MCF 10A (cell line): ENCODE measurements at regions of chr4 and their contacts with region 1.

Region 1: DNA sequence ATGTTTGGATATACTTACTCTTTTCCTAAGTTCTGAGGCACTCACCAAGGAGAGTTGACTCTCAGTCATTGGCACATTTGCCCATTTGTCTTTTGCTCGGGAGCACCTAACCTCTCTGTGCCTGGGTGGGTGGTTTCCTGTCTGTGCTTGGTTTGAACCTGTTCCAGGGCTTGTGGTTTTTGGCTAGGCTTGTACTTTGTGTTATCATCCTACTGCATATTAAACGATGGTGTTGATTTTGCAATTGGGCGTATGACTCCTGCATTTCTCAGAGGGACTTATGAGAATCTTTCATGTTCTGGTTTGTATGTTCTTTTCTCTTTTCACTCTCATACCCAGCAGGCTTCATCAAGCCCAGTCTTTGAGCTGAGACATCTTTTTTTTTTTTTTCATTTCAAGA is 161.7 kb downstream of the BTC start:
- DNase-seq: peak; percentile 100
- H3K4me3 Mint-ChIP-seq: peak overlapping the region; percentile 51
- H3K27ac Mint-ChIP-seq: peak overlapping the region; percentile 80
- H3K4me1 Mint-ChIP-seq: peaks cover 33% of the 10 kb centered on the region
- H3K27me3 Mint-ChIP-seq: no peaks in the 10 kb centered on the region
- CTCF ChIP-seq: no peak

Region 2: DNA sequence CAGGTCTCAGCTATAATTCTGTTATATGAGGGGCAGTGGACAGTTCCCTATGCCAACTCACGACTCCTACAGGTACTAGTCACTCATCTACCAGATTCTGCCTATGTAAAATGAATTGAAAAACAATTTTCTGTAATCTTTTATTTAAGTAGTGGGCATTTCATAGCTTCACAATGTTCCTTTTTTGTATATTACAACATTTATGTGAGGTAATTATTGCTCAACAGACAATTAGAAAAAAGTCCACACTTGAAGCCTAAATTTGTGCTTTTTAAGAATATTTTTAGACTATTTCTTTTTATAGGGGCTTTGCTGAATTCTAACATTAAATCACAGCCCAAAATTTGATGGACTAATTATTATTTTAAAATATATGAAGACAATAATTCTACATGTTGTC is 247.2 kb before region 1 on chr4:
- CTCF ChIA-PET with region 1: no interaction called
- POLR2A ChIA-PET with region 1: no interaction called
- intact Hi-C with region 1: no loop called
- DNase-seq: no peak
- H3K4me3 Mint-ChIP-seq: no peak overlapping the region
- H3K27ac Mint-ChIP-seq: no peak overlapping the region
- H3K4me1 Mint-ChIP-seq: no peaks in the 10 kb centered on the region
- H3K27me3 Mint-ChIP-seq: no peaks in the 10 kb centered on the region
- CTCF ChIP-seq: no peak

Region 3: GRCh38 chr4:74583077-74583693 is 49.4 kb before region 1 on chr4:
- CTCF ChIA-PET with region 1: interaction called, 3 read pairs
- POLR2A ChIA-PET with region 1: interaction called, 10 read pairs
- intact Hi-C with region 1: no loop called
- DNase-seq: peak; percentile 9
- H3K4me3 Mint-ChIP-seq: no peak overlapping the region
- H3K27ac Mint-ChIP-seq: peak overlapping the region; percentile 79
- H3K4me1 Mint-ChIP-seq: peaks cover 23% of the 10 kb centered on the region
- H3K27me3 Mint-ChIP-seq: no peaks in the 10 kb centered on the region
- CTCF ChIP-seq: no peak

Region 4: GRCh38 chr4:74659576-74660411 is 27.2 kb after region 1 on chr4:
- CTCF ChIA-PET with region 1: interaction called, 3 read pairs
- POLR2A ChIA-PET with region 1: interaction called, 13 read pairs
- intact Hi-C with region 1: loop called (anchors 2 kb)
- DNase-seq: peak; percentile 99
- H3K4me3 Mint-ChIP-seq: peak overlapping the region; percentile 32
- H3K27ac Mint-ChIP-seq: peak overlapping the region; percentile 98
- H3K4me1 Mint-ChIP-seq: peaks cover 40% of the 10 kb centered on the region
- H3K27me3 Mint-ChIP-seq: no peaks in the 10 kb centered on the region
- CTCF ChIP-seq: no peak

Region 5: GRCh38 chr4:74665377-74665776 is 32.7 kb after region 1 on chr4:
- CTCF ChIA-PET with region 1: interaction called, 3 read pairs
- POLR2A ChIA-PET with region 1: interaction called, 13 read pairs
- intact Hi-C with region 1: no loop called
- DNase-seq: peak; percentile 45
- H3K4me3 Mint-ChIP-seq: no peak overlapping the region
- H3K27ac Mint-ChIP-seq: peak overlapping the region; percentile 25
- H3K4me1 Mint-ChIP-seq: peaks cover 33% of the 10 kb centered on the region
- H3K27me3 Mint-ChIP-seq: no peaks in the 10 kb centered on the region
- CTCF ChIP-seq: no peak